AG04450 (cell line): ENCODE measurements at regions of chr7 and their contacts with region 1.

Region 1: GRCh38 chr7:117872561-117873309 is 506 bp downstream of the CTTNBP2 start:
- DNase-seq: no peak
- H3K4me3 ChIP-seq: peak overlapping the region; percentile 85
- H3K27ac ChIP-seq: no peak overlapping the region
- H3K27me3 ChIP-seq: no peaks in the 10 kb centered on the region
- CTCF ChIP-seq: peak; percentile 7

Region 2: DNA sequence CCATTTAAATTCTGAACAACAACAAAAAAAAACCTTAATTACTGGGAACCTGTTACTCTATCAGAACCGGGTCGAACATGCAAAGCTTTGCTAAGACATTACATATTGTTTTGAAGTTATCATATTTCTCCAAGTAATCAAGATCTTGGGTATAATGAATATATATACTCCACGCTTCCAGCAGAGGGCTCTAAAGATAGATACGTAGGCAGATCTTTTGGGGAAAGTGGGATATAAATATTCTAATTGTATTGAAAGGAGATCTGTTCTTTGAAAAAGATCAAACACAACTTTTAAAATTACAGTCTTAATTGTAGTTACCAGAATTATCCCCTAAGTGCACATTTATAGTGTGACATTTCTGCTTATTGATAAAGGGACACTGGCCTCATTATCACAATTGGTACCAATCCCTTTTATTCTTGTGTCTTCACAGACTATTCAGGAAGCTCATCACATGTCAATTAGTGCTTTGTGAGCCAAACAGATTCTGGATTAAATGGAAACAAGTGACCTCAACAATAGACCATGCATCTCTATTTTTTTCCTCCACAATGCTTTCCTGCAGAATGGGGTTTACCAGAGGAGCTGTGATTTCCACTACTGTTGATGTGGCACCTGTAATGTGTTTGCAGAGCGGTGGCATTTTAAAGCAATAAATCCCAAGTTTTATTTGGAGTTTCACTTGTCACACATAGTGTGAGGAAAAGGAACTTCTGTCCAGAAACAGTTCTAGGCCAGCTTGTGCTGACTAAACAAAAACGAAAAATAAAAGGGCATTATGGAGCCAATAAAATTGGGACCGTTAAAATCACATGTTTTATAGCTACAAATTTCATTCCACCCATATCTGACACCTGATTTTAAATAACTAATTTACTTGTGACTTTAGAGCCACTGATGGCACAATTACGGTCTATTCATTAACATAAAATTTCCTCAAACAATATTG is 121.8 kb before region 1 on chr7:
- CTCF ChIA-PET with region 1: interaction called, 14 read pairs
- POLR2A ChIA-PET with region 1: no interaction called
- DNase-seq: no peak
- H3K4me3 ChIP-seq: no peak overlapping the region
- H3K27ac ChIP-seq: no peak overlapping the region
- H3K27me3 ChIP-seq: no peaks in the 10 kb centered on the region
- CTCF ChIP-seq: peak; percentile 67

Region 3: DNA sequence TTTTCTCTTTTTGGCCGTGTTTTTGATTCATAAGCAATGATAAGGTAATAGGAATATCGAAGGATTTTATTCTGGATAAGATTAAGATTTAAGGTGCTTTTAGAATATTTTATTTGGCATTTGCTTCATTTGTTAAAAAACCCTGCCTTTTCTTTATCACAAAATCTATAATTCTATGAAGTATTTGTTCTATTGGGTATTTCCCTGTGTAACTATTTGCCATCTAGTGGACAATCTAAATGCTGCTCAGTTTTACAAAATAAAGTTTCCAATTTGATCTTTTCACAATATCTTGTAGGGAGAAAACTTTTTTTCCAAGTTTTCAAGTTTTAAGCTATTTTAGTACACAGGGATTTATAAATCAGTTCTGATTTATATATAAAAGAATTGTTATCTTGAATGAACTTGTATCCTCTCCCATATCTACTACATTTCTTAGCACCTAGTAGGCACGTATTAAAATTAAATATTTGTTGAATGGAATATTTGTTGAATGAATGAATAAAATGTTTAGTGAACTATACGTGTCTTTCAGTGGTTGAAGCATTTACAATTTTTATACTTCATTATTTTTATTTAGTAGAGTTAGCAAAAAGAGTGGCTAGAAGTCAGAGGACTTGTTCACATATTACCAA is 378.2 kb after region 1 on chr7:
- CTCF ChIA-PET with region 1: no interaction called
- POLR2A ChIA-PET with region 1: no interaction called
- DNase-seq: no peak
- H3K4me3 ChIP-seq: no peak overlapping the region
- H3K27ac ChIP-seq: no peak overlapping the region
- H3K27me3 ChIP-seq: no peaks in the 10 kb centered on the region
- CTCF ChIP-seq: peak; percentile 53